RWPE1 (cell line): ENCODE measurements at regions of chr11 and their contacts with region 1.

Region 1: DNA sequence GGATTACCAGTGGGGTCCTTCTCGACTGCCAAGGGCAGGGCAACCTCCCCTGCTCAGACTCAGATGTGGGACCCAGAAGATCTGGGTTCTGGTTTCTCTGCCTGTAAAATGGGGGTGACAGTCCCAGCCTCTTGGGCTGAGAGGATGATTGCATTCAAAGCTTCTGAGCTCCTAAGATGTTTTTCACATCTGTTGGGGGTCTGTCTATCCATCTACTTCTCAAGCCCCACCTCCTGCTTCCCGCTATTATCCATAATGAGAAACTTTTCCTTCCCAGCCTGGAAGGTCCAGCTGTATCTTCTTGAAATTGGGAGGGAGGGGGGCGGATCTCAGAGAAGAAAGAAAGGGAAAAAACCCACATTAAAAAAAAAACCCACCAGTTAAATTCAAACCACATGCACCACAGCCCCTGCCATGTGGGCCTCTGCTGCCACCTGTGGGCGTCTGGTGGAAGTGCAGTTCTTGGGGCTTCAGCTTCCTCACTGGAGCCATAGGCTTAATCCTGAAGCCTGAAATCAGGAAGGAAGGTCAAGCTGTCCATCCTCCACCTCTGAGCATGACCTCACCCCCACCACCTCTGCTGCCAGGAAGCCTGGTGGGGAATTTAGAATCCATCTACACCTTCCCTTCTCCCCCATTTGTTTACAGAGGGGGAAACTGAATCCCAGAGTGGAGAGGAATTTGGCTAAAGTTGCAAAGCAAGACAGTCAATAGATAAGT is 27.3 kb downstream of the ARHGEF17 start:
- DNase-seq: peak; percentile 85
- H3K27ac ChIP-seq: peak overlapping the region; percentile 73
- CTCF ChIP-seq: peak; percentile 98

Region 2: DNA sequence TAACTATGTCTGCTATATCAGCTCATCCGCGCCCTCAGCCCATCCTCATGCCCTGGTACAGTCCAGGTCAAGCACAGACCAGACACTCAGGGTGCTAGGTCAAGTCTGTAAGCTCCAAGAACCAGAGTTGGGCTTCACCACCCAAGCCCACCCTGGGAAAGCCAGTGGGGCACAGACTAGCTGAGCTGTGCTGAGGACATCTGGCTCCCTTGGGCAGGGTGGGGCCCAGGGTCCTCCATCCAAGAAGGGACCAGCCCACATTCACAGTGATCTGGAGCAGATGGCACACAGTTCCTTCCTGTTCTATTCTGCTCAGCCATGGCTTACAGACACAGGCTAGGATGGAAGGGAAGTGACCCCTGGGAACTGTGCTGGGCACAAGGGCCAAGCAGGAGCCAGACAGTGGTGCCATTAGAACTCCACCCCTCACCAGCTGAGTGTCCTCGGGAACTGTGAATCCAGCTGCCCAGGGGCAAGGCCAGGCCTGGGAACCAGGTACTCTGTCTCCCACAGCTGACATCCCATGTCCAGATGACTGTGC is 54.1 kb before region 1 on chr11:
- CTCF ChIA-PET with region 1: no interaction called
- POLR2A ChIA-PET with region 1: no interaction called
- DNase-seq: no peak
- H3K27ac ChIP-seq: no peak overlapping the region
- CTCF ChIP-seq: no peak

Region 3: DNA sequence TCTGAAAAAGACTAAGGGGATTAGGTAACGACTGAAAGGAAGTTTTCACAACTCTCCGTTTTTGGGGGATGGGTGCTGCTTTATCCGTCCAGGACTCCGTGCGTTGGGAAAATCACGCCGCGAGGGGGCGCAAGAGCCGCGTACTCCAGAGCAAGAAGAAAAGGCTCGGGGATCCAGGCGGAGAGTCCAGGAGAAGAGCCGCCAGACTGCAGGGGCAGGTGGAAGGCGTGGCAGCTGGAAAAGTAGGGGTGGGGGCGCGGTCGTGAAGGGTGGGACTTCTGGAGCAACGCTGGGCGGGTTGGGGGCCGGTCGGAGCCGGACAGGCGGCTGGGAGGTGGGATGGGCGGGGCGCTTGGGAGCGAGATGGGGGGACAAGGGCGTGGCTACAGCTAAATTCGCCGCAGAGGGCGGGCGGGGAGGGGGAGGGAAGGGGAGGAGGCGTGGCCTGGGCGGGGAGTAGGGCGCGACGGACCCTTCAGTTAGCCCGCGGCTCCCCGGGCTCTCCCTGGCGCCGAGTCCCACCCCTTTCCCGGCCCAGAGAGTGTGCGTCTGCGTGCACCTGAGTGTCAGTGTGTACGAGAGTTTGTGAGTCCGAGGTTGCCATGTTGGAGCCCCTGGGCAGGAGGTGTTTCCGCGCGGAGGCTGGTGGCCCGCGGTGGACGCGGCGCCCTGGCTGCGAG is 27.9 kb before region 1 on chr11:
- CTCF ChIA-PET with region 1: interaction called, 79 read pairs
- POLR2A ChIA-PET with region 1: no interaction called
- DNase-seq: peak; percentile 98
- H3K27ac ChIP-seq: peak overlapping the region; percentile 98
- CTCF ChIP-seq: peak; percentile 84

Region 4: DNA sequence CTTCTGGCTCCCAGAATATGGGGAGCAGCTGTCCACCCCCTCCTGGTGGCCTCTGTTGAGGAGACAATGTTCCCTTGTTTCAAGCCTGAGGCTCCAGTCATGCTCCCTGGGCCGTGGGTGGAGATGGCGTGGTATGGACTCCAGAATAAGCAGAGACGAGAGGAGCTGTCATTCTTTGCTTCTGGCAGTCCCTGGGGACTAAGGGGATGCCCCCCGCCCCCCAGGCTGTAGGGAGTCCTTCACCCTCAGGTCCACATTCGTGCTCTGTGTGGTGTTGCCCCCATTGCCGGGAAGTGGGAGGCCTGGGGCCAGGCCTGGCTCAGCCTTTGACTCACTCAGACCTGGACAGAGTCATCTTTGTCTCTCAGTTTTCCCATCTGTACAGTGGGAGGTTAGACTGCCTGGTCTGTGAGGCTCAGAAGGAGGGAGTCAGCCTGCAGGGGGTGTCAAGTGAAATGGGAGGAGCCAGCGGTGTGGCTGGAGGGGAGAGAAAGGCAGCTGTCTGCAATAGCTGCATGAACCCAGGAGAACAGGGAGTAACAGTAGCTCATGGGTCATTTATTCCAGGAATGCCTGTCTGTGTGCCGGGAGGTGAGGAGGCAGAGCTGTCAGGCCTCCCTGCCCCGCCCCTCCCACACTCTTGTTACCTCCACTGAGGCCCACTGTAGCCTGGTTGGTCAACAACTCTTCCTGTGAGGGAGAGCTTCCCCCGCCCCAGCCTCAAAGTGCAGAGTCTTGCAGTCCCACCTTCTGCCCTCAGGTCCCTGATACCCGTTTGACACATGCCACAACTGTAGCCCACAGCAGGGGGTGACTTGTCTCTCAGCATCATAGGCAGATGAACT is 21.0 kb before region 1 on chr11:
- CTCF ChIA-PET with region 1: interaction called, 16 read pairs
- POLR2A ChIA-PET with region 1: interaction called, 6 read pairs
- DNase-seq: no peak
- H3K27ac ChIP-seq: peak overlapping the region; percentile 98; the same call in 1 of the 2 replicates
- CTCF ChIP-seq: no peak

Region 5: GRCh38 chr11:73325036-73325981 is 10.1 kb before region 1 on chr11:
- CTCF ChIA-PET with region 1: interaction called, 12 read pairs
- POLR2A ChIA-PET with region 1: no interaction called
- DNase-seq: no peak
- H3K27ac ChIP-seq: no peak overlapping the region
- CTCF ChIP-seq: no peak